ENCODE measurements at regions of chr2 and their contacts with region 1.

Region 1: GRCh38 chr2:25362049-25362433 is 20.3 kb upstream of the DNMT3A start:
- DNase-seq: peak; percentile 76
- H3K4me3 ChIP-seq: peak overlapping the region; percentile 59
- H3K27ac ChIP-seq: no peak overlapping the region
- H3K27me3 ChIP-seq: peaks cover 2% of the 10 kb centered on the region
- CTCF ChIP-seq: peak; percentile 95

Region 2: DNA sequence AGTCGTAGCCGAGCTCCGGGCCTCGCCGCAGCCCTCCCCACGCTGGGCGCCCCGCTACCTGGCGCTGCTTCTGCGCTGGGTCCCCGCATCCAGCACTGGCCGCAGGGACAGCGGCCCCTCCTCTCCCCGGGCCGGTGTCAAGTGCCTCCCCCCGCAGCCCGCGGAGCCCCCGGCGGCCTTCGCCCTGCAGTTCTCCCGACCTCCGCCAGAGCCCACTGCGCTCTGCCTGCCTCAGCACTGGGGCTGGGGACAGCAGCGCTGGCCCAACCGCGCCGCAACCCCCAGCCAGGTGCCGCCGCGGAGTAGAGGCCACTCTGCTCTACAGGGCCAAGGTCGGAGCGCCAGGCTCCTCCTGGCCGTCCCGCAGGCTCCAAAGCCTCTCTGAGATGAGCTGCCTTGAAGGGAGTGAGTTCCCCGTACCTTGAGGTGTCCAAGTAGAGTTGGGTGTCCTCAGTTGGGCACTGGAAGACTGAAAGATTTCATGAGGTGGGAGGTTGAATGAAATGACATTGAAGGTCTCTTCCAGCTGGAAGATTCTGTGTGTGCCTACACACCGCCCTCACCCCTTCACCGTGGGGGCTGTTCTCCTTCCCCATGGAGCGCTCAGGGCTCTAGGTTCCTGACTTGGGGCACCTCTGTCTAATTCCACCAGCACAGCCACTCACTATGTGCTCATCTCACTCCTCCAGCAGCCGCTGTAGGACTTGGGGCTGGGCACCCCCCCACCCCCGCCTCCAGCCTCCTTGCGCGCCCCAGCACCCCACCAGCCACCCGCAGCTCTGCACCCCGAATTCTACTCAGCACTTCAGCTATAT is 19.5 kb before region 1 on chr2:
- CTCF ChIA-PET with region 1: interaction called, 87 read pairs
- POLR2A ChIA-PET with region 1: no interaction called
- DNase-seq: peak; percentile 48
- H3K4me3 ChIP-seq: peak overlapping the region; percentile 60
- H3K27ac ChIP-seq: no peak overlapping the region
- H3K27me3 ChIP-seq: no peaks in the 10 kb centered on the region
- CTCF ChIP-seq: peak; percentile 92

Region 3: GRCh38 chr2:25386971-25387875 is 25.2 kb after region 1 on chr2:
- CTCF ChIA-PET with region 1: interaction called, 21 read pairs
- POLR2A ChIA-PET with region 1: no interaction called
- DNase-seq: no peak
- H3K4me3 ChIP-seq: no peak overlapping the region
- H3K27ac ChIP-seq: no peak overlapping the region
- H3K27me3 ChIP-seq: no peaks in the 10 kb centered on the region
- CTCF ChIP-seq: no peak

Region 4: GRCh38 chr2:25417715-25418369 is 55.8 kb after region 1 on chr2:
- CTCF ChIA-PET with region 1: interaction called, 12 read pairs
- POLR2A ChIA-PET with region 1: no interaction called
- DNase-seq: no peak
- H3K4me3 ChIP-seq: no peak overlapping the region
- H3K27ac ChIP-seq: no peak overlapping the region
- H3K27me3 ChIP-seq: no peaks in the 10 kb centered on the region
- CTCF ChIP-seq: no peak

Region 5: GRCh38 chr2:25512707-25513106 is 150.7 kb after region 1 on chr2:
- CTCF ChIA-PET with region 1: interaction called, 12 read pairs
- POLR2A ChIA-PET with region 1: no interaction called
- DNase-seq: no peak
- H3K4me3 ChIP-seq: no peak overlapping the region
- H3K27ac ChIP-seq: no peak overlapping the region
- H3K27me3 ChIP-seq: no peaks in the 10 kb centered on the region
- CTCF ChIP-seq: no peak

Region 6: GRCh38 chr2:25567406-25567805 is 205.4 kb after region 1 on chr2:
- CTCF ChIA-PET with region 1: interaction called, 11 read pairs
- POLR2A ChIA-PET with region 1: no interaction called
- DNase-seq: no peak
- H3K4me3 ChIP-seq: no peak overlapping the region
- H3K27ac ChIP-seq: no peak overlapping the region
- H3K27me3 ChIP-seq: no peaks in the 10 kb centered on the region
- CTCF ChIP-seq: peak; percentile 60

Region 7: GRCh38 chr2:25991965-25992364 is 629.9 kb after region 1 on chr2:
- CTCF ChIA-PET with region 1: no interaction called
- POLR2A ChIA-PET with region 1: no interaction called
- DNase-seq: no peak
- H3K4me3 ChIP-seq: no peak overlapping the region
- H3K27ac ChIP-seq: no peak overlapping the region
- H3K27me3 ChIP-seq: no peaks in the 10 kb centered on the region
- CTCF ChIP-seq: no peak

Region 8: GRCh38 chr2:26216587-26216986 is 854.5 kb after region 1 on chr2:
- CTCF ChIA-PET with region 1: no interaction called
- POLR2A ChIA-PET with region 1: no interaction called
- DNase-seq: no peak
- H3K4me3 ChIP-seq: no peak overlapping the region
- H3K27ac ChIP-seq: no peak overlapping the region
- H3K27me3 ChIP-seq: no peaks in the 10 kb centered on the region
- CTCF ChIP-seq: no peak

Measured in AG04450 (cell line).